ENCODE measurements at regions of chr6 and their contacts with region 1.

Region 1: GRCh38 chr6:88780714-88781389 is 182.6 kb downstream of the RNGTT start:
- DNase-seq: peak; percentile 62
- ATAC-seq: peak; percentile 83
- H3K4me3 Mint-ChIP-seq: no peak overlapping the region
- H3K27ac Mint-ChIP-seq: no peak overlapping the region
- H3K4me1 Mint-ChIP-seq: peaks cover 7% of the 10 kb centered on the region
- H3K27me3 Mint-ChIP-seq: no peaks in the 10 kb centered on the region
- CTCF ChIP-seq: peak; percentile 86

Region 2: DNA sequence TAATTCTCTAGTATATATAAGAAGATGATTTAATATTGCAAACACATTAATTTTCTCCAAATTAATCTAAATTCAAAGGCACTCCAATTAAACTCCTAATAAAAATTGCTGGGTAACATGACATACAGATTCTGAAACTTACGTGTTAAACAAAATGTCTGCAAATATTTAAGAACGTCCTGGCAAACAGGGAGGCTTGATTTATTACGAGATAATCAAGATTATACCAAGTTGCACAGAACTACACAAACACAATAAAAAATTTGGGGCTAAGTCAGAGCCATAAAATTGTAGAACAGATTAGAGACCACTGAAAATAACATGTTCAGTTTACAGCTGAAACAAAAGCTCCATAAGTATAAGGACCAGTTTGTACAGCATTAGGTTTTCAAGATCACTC is 16.1 kb after region 1 on chr6:
- CTCF ChIA-PET with region 1: interaction called, 15 read pairs
- POLR2A ChIA-PET with region 1: no interaction called
- intact Hi-C with region 1: no loop called
- DNase-seq: no peak
- ATAC-seq: no peak
- H3K4me3 Mint-ChIP-seq: no peak overlapping the region
- H3K27ac Mint-ChIP-seq: no peak overlapping the region
- H3K4me1 Mint-ChIP-seq: no peaks in the 10 kb centered on the region
- H3K27me3 Mint-ChIP-seq: no peaks in the 10 kb centered on the region
- CTCF ChIP-seq: no peak

Region 3: GRCh38 chr6:88870717-88871330 is 90.0 kb after region 1 on chr6:
- CTCF ChIA-PET with region 1: interaction called, 27 read pairs
- POLR2A ChIA-PET with region 1: no interaction called
- intact Hi-C with region 1: no loop called
- DNase-seq: peak; percentile 56
- ATAC-seq: no peak
- H3K4me3 Mint-ChIP-seq: no peak overlapping the region
- H3K27ac Mint-ChIP-seq: no peak overlapping the region
- H3K4me1 Mint-ChIP-seq: peaks cover 24% of the 10 kb centered on the region
- H3K27me3 Mint-ChIP-seq: no peaks in the 10 kb centered on the region
- CTCF ChIP-seq: peak; percentile 84

Measured in activated CD8-positive, alpha-beta T cell treated with anti-CD3 and anti-CD28 coated beads for 36 hours (primary cell).